CD8-positive, alpha-beta memory T cell (primary cell): ENCODE measurements at regions of chr17 and their contacts with region 1.

Region 1: GRCh38 chr17:76868176-76868668 is at the start of gene MGAT5B:
- DNase-seq: peak; percentile 63 to 78 (median 65)
- H3K4me3 ChIP-seq: no peak within 1 kb of the TSS
- H3K4me3 Mint-ChIP-seq: peak within 1 kb of the TSS; percentile 48 to 89 (median 73)
- H3K27ac ChIP-seq: no peak within 1 kb of the TSS
- H3K27ac Mint-ChIP-seq: peak within 1 kb of the TSS in 1 of 8 donors; percentile 28
- H3K4me1 ChIP-seq: peaks cover 4% of the 10 kb centered on the region
- H3K4me1 Mint-ChIP-seq: peaks cover 2 to 18% (median 5%) of the 10 kb centered on the region in 3 donors
- H3K27me3 ChIP-seq: peaks cover 11% of the 10 kb centered on the region
- H3K27me3 Mint-ChIP-seq: peaks cover 24 to 45% of the 10 kb centered on the region in 2 donors
- total RNA-seq, gene MGAT5B: 0.40 to 0.46 TPM

Region 2: DNA sequence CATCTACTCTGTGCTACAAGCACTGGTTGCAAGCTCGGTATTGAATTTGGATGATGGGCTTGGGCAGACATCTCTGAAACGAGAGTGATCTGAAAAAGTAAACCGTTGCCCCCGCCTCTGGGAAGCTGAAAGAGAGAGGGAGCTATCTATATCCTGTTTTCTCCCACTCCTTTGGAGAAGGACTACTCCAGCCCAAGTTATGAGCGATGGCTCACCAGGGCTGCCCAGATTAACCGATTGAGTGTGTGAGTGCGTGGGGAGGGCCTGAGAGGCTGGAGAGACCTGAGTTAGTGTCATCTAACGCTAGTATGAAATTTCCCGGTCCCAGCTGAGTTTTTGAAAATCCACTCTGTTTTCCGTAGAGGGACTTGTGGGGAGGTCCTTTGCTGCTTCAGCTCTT is 11.5 kb after region 1 on chr17:
- CTCF ChIA-PET with region 1: interaction called, 11 read pairs
- POLR2A ChIA-PET with region 1: no interaction called
- DNase-seq: no peak
- H3K4me3 ChIP-seq: no peak overlapping the region
- H3K4me3 Mint-ChIP-seq: no peak overlapping the region
- H3K27ac ChIP-seq: no peak overlapping the region
- H3K27ac Mint-ChIP-seq: peak overlapping the region in 1 of 8 donors; percentile 9
- H3K4me1 ChIP-seq: no peaks in the 10 kb centered on the region
- H3K4me1 Mint-ChIP-seq: no peaks in the 10 kb centered on the region
- H3K27me3 ChIP-seq: no peaks in the 10 kb centered on the region
- H3K27me3 Mint-ChIP-seq: peaks cover 7 to 11% of the 10 kb centered on the region in 2 donors

Region 3: DNA sequence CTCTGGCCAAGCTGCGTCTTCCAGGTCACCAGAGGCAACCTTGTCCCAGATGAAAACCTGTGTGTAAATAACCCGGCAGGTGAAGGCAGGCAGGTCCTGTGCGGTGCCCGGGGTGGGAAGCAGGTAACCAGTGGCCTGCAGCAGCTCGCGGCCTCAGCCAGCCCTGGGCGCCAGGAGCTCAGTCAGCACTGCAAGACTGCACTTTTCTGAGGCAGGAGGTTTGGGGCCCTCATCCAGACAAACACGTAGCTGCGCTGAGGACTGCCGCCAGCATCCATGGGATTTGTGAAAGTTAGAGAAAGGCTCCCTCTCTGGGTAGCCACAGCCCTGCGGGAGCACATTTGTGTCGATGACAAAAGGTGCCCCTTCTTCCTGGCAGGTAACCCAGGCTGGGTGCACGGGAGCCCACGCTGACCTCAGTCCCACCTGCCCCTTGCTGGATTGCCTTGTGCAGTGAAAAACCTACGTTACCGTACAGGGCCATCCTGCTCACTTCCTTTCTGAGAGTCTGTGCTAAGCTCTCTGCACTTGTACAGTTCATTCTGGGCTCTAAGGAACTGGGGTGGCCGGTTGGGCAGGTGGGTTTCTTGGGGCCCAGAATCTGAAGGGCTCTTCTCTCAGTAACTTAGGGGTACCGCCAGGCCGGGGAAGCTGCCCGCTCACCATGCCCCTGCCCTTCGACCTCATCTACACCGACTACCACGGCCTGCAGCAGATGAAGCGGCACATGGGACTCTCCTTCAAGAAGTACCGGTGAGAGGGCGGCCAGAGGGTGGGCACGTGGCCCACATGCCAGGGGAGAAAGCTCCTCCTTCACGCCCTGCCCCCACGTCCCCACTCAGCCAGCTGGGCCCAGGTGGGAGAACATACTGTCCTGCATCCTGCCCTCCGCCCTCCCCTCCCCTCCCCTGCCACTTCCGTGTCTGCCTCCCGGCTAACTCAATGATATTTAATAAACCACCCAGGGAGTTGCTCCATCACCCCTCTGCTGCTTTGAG is 56.4 kb after region 1 on chr17:
- CTCF ChIA-PET with region 1: no interaction called
- POLR2A ChIA-PET with region 1: no interaction called
- DNase-seq: no peak
- H3K4me3 ChIP-seq: no peak overlapping the region
- H3K4me3 Mint-ChIP-seq: no peak overlapping the region
- H3K27ac ChIP-seq: no peak overlapping the region
- H3K27ac Mint-ChIP-seq: peak overlapping the region in 1 of 8 donors; percentile 68
- H3K4me1 ChIP-seq: no peaks in the 10 kb centered on the region
- H3K4me1 Mint-ChIP-seq: no peaks in the 10 kb centered on the region
- H3K27me3 ChIP-seq: no peaks in the 10 kb centered on the region
- H3K27me3 Mint-ChIP-seq: peaks cover 2 to 22% of the 10 kb centered on the region in 2 donors

Region 4: GRCh38 chr17:77045441-77046091 is 177.3 kb after region 1 on chr17:
- CTCF ChIA-PET with region 1: interaction called, 12 read pairs
- POLR2A ChIA-PET with region 1: no interaction called
- DNase-seq: no peak
- H3K4me3 ChIP-seq: no peak overlapping the region
- H3K4me3 Mint-ChIP-seq: no peak overlapping the region
- H3K27ac ChIP-seq: no peak overlapping the region
- H3K27ac Mint-ChIP-seq: no peak overlapping the region
- H3K4me1 ChIP-seq: no peaks in the 10 kb centered on the region
- H3K4me1 Mint-ChIP-seq: no peaks in the 10 kb centered on the region
- H3K27me3 ChIP-seq: no peaks in the 10 kb centered on the region
- H3K27me3 Mint-ChIP-seq: peaks cover 3 to 8% of the 10 kb centered on the region in 2 donors

Region 5: DNA sequence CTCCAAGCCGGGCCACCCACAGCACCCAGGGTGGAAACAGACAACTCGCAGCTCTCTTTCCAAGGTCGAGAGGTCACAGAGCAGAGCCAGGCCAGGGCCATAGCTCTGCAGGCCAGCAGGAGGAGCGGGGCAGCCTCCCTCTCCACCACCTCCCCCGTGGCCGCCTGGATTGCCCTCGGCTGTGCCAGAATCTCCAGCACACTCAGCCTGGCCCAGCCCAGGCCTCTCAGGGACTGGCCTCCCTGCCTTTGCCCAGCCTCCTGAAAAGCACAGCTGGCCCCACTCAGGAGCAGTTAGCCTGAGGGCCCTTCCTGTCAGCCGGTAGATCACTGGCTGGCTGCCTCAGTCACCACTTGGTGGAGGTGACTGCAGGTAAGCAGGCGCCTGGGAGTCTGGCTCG is 186.7 kb after region 1 on chr17:
- CTCF ChIA-PET with region 1: interaction called, 125 read pairs
- POLR2A ChIA-PET with region 1: interaction called, 6 read pairs
- DNase-seq: no peak
- H3K4me3 ChIP-seq: no peak overlapping the region
- H3K4me3 Mint-ChIP-seq: no peak overlapping the region
- H3K27ac ChIP-seq: no peak overlapping the region
- H3K27ac Mint-ChIP-seq: no peak overlapping the region
- H3K4me1 ChIP-seq: no peaks in the 10 kb centered on the region
- H3K4me1 Mint-ChIP-seq: peaks cover 2 to 4% (median 3%) of the 10 kb centered on the region in 3 donors
- H3K27me3 ChIP-seq: no peaks in the 10 kb centered on the region
- H3K27me3 Mint-ChIP-seq: peaks cover 5 to 41% of the 10 kb centered on the region in 2 donors

Region 6: DNA sequence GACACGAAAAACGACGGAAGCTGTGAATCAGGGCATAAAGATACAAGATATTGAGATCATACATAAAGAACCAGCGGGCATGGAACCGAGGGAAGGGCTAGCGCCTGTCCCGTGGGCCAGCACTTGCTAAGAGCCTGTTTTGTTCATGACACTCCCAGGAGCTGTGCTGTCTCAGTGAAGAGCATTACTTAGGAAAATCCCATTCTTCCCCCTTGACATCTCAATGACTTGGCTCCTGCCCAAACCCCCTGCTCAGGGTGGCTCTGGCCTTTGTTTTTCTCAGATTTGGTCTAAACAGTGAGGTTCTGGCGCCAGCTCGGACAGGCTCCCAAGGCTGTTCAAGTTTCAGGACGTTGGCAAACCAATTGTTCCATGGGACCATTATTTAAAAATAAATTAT is 193.4 kb after region 1 on chr17:
- CTCF ChIA-PET with region 1: interaction called, 125 read pairs
- POLR2A ChIA-PET with region 1: interaction called, 6 read pairs
- DNase-seq: no peak
- H3K4me3 ChIP-seq: no peak overlapping the region
- H3K4me3 Mint-ChIP-seq: no peak overlapping the region
- H3K27ac ChIP-seq: no peak overlapping the region
- H3K27ac Mint-ChIP-seq: no peak overlapping the region
- H3K4me1 ChIP-seq: no peaks in the 10 kb centered on the region
- H3K4me1 Mint-ChIP-seq: peaks cover 0 to 1% (median 0%) of the 10 kb centered on the region in 3 donors
- H3K27me3 ChIP-seq: no peaks in the 10 kb centered on the region
- H3K27me3 Mint-ChIP-seq: peaks cover 4 to 19% of the 10 kb centered on the region in 2 donors

Region 7: DNA sequence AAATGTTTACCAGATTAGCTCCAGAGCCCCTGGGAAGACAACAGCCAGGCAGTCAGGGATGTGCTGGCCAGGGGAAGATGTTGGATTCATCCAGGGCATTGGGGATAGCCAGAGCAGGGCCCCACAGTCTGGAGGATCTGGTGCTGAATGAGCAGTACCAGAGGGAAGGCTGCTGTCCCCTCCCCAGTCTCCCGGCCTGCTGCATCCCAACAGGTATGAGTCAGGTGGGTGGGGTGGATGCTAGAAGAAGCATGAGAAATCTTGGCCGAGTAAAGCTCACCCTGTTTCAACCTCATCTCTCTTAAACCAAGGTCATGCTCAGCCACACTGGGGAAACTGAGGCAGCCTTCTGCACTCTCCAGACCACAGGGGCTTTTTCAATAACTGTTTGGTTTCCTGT is 200.7 kb after region 1 on chr17:
- CTCF ChIA-PET with region 1: interaction called, 39 read pairs
- POLR2A ChIA-PET with region 1: no interaction called
- DNase-seq: no peak
- H3K4me3 ChIP-seq: no peak overlapping the region
- H3K4me3 Mint-ChIP-seq: no peak overlapping the region
- H3K27ac ChIP-seq: no peak overlapping the region
- H3K27ac Mint-ChIP-seq: no peak overlapping the region
- H3K4me1 ChIP-seq: no peaks in the 10 kb centered on the region
- H3K4me1 Mint-ChIP-seq: peaks cover 0 to 3% (median 0%) of the 10 kb centered on the region in 3 donors
- H3K27me3 ChIP-seq: no peaks in the 10 kb centered on the region
- H3K27me3 Mint-ChIP-seq: peaks cover 14 to 53% of the 10 kb centered on the region in 2 donors

Region 8: DNA sequence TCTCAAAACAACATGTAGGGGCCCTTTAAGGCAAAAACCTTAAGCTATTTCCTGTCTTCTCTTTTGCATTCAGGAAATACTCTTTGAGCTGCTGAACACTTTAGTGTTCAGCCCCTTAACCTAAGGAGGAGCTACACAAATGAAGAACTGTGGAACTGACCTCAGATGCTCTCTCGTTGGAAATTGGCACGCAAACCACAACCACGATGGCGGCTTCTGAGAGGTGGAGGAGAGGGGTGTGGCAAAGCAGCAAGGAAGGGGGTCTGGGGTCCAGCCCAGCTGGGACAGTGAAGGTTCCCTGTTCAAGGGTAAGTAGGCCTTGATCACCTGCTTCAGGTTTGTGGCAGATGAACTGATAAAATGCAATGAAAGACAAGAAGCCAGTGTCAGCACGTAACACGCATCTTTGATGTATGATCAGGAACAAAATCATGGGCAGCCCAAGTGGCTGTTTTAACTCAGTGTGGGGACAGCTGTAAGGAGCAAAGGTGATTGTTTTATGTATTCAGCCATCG is 798.7 kb after region 1 on chr17:
- CTCF ChIA-PET with region 1: no interaction called
- POLR2A ChIA-PET with region 1: no interaction called
- DNase-seq: peak; percentile 50 to 86 (median 76)
- H3K4me3 ChIP-seq: peak overlapping the region; percentile 86
- H3K4me3 Mint-ChIP-seq: peak overlapping the region; percentile 82 to 94 (median 90)
- H3K27ac ChIP-seq: peak overlapping the region; percentile 47
- H3K27ac Mint-ChIP-seq: peak overlapping the region; percentile 75 to 99 (median 96)
- H3K4me1 ChIP-seq: peaks cover 45% of the 10 kb centered on the region
- H3K4me1 Mint-ChIP-seq: peaks cover 48 to 64% (median 55%) of the 10 kb centered on the region in 3 donors
- H3K27me3 ChIP-seq: no peaks in the 10 kb centered on the region
- H3K27me3 Mint-ChIP-seq: peaks cover 0 to 1% of the 10 kb centered on the region in 2 donors